Dorsolateral prefrontal cortex (tissue), 120 donors: ENCODE measurements at regions of chr6 and their contacts with region 1.

Region 1: DNA sequence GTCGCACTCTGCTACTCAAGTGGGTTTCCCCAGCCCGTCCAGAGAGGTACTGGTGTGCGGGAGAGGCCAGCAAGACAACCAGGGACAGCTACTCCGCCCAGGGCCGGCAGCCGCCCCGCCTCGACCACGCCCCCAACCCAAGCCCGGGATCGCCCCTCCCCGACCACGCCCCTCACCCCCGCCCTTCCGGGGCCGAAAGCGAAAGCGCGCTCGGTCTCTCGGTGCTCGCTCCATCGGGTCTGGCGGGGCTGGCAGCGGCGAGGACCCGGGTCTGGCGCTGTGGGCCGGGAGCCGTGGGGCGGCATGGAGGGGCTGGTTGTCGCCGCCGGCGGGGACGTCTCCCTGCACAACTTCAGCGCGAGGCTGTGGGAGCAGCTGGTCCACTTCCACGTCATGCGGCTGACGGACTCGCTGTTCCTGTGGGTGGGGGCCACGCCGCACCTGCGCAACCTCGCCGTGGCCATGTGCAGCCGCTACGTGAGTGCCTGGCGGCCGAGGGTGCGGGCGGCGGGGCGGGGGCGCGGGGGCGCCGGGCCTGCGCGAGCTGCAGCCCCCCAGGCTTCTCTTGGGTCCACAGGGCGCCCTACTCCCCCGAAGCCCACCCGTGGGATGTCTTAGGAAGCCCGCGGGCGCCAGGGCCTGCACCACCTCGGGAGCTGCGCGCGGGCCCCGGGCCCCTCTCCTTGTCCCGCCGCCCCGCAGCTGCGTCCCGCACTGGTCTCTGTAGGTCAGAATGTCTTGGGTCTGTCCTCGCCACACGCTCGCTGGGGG is at the start of gene PSMG4:
- DNase-seq: peak; percentile 82 to 96 (median 90)
- H3K4me3 ChIP-seq: peak within 1 kb of the TSS; percentile 53 to 98 (median 89)
- H3K27ac ChIP-seq: peak within 1 kb of the TSS in 54 of 59 donors; percentile 2 to 92 (median 75)
- H3K27me3 ChIP-seq: no peaks in the 10 kb centered on the region
- CTCF ChIP-seq: peak in 25 of 56 donors; percentile 1 to 47 (median 25)
- total RNA-seq, gene PSMG4: 17.1 to 34.4 (median 25.3) TPM

Region 2: DNA sequence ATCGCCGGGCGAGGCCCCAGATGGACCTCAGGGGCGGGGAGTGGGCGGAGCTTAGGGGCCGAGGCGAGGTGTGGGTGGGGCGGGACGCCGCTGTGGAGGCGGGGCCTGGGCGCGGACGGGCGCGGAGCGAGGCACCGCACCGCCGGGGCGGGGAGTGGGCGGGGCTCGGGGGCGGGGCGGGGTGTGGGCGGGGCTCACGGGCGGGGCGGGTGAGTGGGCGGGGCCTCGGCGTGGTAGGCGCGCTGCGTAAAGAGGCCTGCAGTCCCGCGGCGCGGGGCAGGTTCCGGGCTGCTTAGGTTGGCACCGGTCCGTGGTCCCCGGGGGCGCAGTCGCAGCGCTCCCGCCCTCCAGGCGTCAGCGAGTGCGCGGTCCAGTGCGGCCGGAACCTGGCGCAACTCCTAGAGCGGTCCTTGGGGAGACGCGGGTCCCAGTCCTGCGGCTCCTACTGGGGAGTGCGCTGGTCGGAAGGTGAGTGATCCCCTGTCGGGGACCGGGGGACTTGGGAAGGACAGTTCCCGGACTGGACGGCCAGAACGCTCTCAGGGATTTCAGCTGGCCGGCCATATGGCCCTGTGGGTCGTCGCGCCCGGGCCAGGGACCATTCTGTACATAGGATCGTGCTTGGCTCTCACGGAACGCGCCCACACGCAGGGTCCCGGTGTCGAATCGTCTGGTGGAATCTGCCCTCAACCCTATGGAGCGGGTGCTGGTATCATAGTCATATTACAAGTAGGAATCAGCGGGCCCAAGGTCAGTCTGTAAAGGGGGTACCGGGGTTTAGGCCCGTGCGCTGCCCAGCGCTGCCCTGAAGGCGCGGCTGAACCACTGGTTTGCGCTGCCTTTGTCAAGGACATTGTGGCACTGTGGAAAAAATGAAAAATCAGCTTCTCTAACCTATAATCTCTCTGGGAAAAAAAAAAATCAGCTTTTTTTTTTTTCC is 259.0 kb before region 1 on chr6 and contains the start of gene NQO2:
- intact Hi-C with region 1: loop called (anchors 5 to 10 kb)
- DNase-seq: peak; percentile 78 to 94 (median 88)
- H3K4me3 ChIP-seq: peak within 1 kb of the TSS; percentile 62 to 100 (median 89)
- H3K27ac ChIP-seq: peak within 1 kb of the TSS; percentile 49 to 96 (median 86)
- H3K27me3 ChIP-seq: no peaks in the 10 kb centered on the region
- CTCF ChIP-seq: peak in 18 of 56 donors; percentile 5 to 39 (median 18)
- total RNA-seq, gene NQO2: 27.5 to 103 (median 66.8) TPM

Region 3: DNA sequence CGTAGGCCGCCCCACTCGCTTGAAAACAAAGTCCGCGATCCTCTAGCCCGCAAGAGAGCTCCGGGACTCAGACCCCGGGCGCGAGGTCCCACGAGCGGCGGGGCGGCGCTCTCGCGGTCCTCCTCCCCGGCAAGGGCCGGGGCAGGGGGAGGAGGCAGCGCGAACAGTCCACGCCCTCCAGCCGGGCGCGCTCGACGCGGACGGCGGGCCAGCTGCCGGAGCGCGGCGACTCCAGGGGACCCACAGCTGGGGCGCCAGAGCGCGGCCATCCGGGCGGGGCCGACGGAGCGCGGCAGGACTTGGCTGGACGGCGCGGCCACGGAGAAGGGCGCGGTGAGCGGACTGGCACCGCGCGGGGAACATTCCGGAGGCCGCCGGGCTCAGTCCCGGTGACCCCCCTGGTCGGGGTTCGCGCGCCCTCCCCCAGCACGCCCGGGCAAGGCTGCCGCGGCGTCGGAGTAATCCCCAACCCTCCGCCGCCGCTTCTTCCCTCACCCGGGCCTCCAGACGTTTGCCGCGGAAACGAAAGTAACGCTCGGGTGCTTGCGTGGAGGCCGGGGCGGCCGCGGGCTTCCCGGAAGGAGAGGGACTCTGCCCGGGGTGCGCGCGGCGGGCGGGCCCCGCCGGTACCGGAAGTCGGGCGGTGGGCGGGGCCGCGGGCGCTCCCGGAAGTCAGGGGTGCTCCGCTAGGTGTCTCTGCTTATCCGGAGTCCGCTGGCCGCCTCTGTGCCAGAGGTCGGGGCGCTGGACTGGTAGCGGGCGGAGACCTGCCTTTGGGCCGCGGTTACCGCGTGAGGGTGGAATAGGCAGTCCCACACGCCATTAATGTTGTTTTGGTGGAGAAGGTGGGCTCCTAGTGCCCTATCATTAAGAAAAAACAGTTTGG is 190.3 kb before region 1 on chr6 and contains the start of gene RIPK1:
- intact Hi-C with region 1: loop called in 1 of 2 experiments (anchors 5 kb)
- DNase-seq: peak; percentile 85 to 96 (median 92)
- H3K4me3 ChIP-seq: peak within 1 kb of the TSS; percentile 68 to 98 (median 89)
- H3K27ac ChIP-seq: peak within 1 kb of the TSS; percentile 94 to 100 (median 99)
- H3K27me3 ChIP-seq: no peaks in the 10 kb centered on the region
- CTCF ChIP-seq: peak in 55 of 56 donors; percentile 34 to 80 (median 64)
- total RNA-seq, gene RIPK1: 6.5 to 17.9 (median 11.1) TPM

Region 4: DNA sequence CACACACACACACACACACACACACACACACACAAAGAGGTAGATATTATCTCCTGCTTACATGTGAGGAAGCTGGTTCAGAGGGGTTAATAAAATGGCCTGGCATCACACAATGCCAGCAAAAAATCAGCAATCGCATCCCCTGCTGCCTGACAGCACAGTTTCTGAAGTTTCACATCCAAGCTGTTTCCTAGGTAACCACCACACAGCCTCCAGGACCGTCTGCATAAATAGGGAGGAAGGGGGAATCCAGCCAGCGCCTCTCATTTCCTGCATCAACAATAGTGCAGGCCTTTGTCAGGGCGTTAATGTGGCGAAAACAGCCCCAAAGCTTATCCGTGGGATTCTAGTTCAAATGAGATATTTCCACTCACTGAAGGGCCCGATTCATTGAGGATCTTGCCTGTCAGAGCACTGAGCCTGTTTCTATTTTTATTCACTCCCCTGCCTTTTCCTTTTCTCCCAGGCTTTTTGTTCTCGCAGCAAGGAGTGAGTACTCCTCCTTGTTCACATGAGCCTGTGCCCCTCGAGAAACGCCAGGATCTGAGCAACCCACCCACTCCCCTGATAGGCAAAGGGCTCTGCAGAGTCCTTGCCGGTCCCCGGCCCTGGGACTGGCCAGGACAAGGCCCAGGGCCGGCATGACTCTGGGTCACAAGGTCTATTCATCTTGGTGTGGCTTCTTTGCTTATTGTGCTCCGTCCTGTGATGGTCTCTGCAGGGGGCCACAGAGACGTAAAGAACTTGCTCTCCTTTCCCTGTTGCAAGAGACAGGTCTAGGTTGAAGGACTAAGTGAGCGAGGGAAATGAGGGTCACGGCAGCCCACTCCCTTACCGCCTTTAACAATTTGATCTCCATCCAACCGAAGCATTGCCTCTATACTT is 64.1 kb before region 1 on chr6:
- intact Hi-C with region 1: loop called in 1 of 2 experiments (anchors 2 kb)
- DNase-seq: peak in 9 of 10 donors; percentile 63 to 86 (median 73)
- H3K4me3 ChIP-seq: peak overlapping the region in 52 of 59 donors; percentile 3 to 52 (median 30)
- H3K27ac ChIP-seq: peak overlapping the region; percentile 20 to 94 (median 85)
- H3K27me3 ChIP-seq: no peaks in the 10 kb centered on the region
- CTCF ChIP-seq: no peak